ENCODE measurements at regions of chr16 and their contacts with region 1.

Region 1: GRCh38 chr16:69848637-69849545 is 86.8 kb downstream of the WWP2 start:
- DNase-seq: peak; percentile 84
- H3K4me3 ChIP-seq: no peak overlapping the region
- H3K27ac ChIP-seq: peak overlapping the region; percentile 61
- H3K27me3 ChIP-seq: no peaks in the 10 kb centered on the region
- CTCF ChIP-seq: no peak

Region 2: GRCh38 chr16:68636064-68636560 is 1212.8 kb before region 1 on chr16:
- CTCF ChIA-PET with region 1: no interaction called
- POLR2A ChIA-PET with region 1: no interaction called
- DNase-seq: no peak
- H3K4me3 ChIP-seq: no peak overlapping the region
- H3K27ac ChIP-seq: no peak overlapping the region
- H3K27me3 ChIP-seq: no peaks in the 10 kb centered on the region
- CTCF ChIP-seq: no peak

Region 3: GRCh38 chr16:69917739-69918138 is 68.8 kb after region 1 on chr16:
- CTCF ChIA-PET with region 1: no interaction called
- POLR2A ChIA-PET with region 1: interaction called, 11 read pairs
- DNase-seq: peak; percentile 86
- H3K4me3 ChIP-seq: peak overlapping the region; percentile 20
- H3K27ac ChIP-seq: peak overlapping the region; percentile 96
- H3K27me3 ChIP-seq: no peaks in the 10 kb centered on the region
- CTCF ChIP-seq: no peak